Dendritic cell treated with granulocyte-macrophage colony-stimulating factor and Interleukin-4, amounts not matched to agents 40 ng/mL and 50 ng/mL, for 4 days (primary cell): ENCODE measurements at regions of chr2 and their contacts with region 1.

Region 1: DNA sequence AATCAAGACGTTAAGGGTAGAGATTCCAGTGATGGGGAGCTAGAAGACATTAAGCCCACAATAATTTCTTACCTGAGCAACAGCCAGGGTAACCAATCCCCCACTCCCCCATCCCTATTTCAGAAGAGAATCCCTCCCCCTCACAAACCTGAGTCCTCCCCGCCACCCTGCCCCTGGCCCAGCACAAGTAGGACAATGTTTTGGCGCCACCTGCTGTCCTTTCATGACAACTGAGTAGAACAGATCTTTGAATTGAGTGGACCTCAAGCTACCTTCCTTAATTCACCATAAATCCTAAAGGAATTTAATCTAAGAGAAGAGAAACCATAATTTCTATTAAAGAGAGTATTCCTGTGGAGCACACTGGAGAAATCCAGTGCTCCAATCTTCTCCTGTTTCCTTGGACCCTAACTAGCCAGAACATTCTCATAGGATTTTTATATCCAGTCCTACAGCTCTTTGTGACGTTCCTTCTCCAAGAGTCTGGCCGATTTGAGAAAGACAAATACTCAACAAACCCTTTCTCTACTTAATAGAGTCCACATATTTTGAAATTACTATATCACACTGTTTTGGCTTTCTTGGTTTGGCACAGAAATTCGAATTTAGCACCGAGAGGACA is 41.1 kb downstream of the NHEJ1 start:
- H3K4me3 Mint-ChIP-seq: no peak overlapping the region
- H3K27ac Mint-ChIP-seq: no peak overlapping the region
- H3K4me1 Mint-ChIP-seq: peaks cover 44% of the 10 kb centered on the region
- H3K27me3 Mint-ChIP-seq: no peaks in the 10 kb centered on the region

Region 2: GRCh38 chr2:219029829-219030165 is 89.7 kb before region 1 on chr2:
- intact Hi-C with region 1: loop called (anchors 1 kb)
- H3K4me3 Mint-ChIP-seq: no peak overlapping the region
- H3K27ac Mint-ChIP-seq: no peak overlapping the region
- H3K4me1 Mint-ChIP-seq: no peaks in the 10 kb centered on the region
- H3K27me3 Mint-ChIP-seq: peaks cover 30% of the 10 kb centered on the region

Region 3: DNA sequence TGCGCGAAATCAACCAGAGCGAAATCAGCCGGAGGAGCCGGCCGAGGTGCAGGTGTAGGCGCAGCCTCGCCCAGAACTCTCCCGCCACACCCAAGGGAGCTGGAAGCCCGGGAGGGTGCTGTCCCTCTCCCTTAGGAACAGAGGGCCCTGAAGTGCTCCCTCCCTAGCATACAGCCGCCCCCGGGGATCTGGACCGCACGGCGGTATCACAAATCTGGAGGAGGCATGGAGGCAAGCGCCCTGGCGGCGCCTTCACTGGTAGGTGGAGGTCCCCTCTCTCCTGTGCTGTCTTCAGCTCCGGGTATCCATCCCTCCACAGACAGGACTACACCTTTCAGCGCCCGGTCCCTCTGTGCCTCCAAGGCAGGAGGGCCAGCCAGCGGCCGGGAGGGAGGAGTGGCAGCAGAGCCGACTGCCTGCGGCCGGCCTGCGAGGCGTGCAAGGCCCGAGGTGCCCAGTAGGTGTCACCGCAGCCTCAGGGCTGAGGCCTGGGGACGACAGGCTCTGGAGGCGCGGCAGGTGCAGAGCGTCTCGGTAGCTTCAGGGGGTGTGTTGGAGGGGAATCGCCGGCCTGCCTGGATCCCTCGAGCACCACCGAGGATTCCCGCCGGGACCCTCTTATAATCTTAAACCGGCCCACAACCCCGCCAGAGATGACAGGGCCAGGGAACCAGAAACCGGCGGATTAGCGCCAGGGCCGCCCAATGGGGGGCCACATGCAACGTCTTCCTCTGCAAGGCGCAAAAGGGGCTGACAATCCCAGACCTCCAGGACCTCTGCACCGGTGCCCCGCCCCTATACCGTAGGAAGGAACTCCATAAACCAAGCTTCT is 61.6 kb before region 1 on chr2:
- intact Hi-C with region 1: loop called (anchors 1 kb)
- H3K4me3 Mint-ChIP-seq: peak overlapping the region; percentile 41
- H3K27ac Mint-ChIP-seq: no peak overlapping the region
- H3K4me1 Mint-ChIP-seq: peaks cover 28% of the 10 kb centered on the region
- H3K27me3 Mint-ChIP-seq: peaks cover 89% of the 10 kb centered on the region

Region 4: GRCh38 chr2:219073413-219074129 is 46.0 kb before region 1 on chr2:
- intact Hi-C with region 1: loop called (anchors 1 kb)
- H3K4me3 Mint-ChIP-seq: no peak overlapping the region
- H3K27ac Mint-ChIP-seq: peak overlapping the region; percentile 25
- H3K4me1 Mint-ChIP-seq: peaks cover 38% of the 10 kb centered on the region
- H3K27me3 Mint-ChIP-seq: peaks cover 2% of the 10 kb centered on the region